ENCODE measurements at regions of chr1 and their contacts with region 1.

Region 1: DNA sequence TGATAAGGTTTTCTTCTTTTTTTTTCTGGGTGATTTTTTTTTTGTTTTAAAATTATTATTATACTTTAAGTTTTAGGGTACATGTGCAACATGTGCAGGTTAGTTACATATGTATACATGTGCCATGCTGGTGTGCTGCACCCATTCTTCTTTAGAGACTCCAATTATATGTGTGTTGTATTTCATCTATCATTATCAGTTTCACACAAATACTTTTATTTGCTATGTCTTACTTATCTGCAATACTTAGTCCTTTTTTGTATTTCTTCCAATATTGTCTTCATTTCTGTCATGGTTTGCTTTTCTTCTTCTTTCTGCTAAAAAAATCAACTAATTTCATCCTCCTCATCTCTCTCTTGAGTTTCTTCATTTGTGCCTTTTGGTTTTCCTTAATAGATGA is 3.9 kb upstream of the PDE4B start:
- DNase-seq: no peak
- H3K4me3 ChIP-seq: no peak overlapping the region
- H3K27ac ChIP-seq: no peak overlapping the region
- H3K4me1 ChIP-seq: no peaks in the 10 kb centered on the region
- H3K27me3 ChIP-seq: peaks cover 5 to 19% of the 10 kb centered on the region in 2 donors
- CTCF ChIP-seq: no peak
- POLR2A ChIP-seq: no peak

Region 2: DNA sequence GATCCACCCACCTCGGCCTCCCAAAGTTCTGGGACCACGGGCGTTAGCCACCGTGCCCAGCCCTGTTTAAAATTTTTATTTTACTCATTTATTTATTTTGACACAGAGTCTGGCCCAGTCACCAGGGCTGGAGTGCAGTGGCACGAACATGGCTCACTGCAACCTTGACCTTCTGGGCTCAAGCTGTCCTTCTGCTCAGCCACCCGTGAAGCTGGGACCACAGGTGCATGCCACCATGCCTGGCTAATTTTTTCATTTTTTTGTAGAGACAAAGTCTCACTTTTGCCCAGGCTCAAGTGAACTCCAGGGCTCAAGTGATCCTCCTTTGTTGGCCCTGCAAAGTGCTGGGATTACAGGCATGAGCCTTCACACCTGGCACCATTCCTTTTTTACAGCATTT is 506.9 kb before region 1 on chr1:
- intact Hi-C with region 1: loop called (anchors 5 kb)
- DNase-seq: no peak
- H3K4me3 ChIP-seq: no peak overlapping the region
- H3K27ac ChIP-seq: no peak overlapping the region
- H3K4me1 ChIP-seq: no peaks in the 10 kb centered on the region
- H3K27me3 ChIP-seq: no peaks in the 10 kb centered on the region
- CTCF ChIP-seq: no peak
- POLR2A ChIP-seq: no peak

Region 3: DNA sequence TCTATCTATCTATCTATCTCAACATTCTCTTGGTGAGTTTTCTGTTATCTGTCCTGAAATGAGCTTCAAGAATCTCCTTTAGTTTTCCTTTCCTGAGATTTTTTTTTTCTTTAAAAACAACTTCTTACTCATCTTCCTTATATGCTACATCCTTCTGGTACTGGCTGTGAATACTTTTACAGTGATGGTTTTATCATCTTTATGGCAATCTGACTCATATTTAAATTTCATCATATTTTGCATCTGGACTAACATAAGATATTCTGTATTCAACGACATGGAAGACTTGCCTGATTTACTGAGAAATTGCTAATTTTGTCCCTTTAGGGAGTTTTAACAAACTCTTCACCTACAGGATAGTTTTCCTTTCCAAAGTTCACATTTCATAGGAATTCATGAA is 37.0 kb after region 1 on chr1:
- intact Hi-C with region 1: loop called (anchors 2 kb)
- DNase-seq: no peak
- H3K4me3 ChIP-seq: no peak overlapping the region
- H3K27ac ChIP-seq: no peak overlapping the region
- H3K4me1 ChIP-seq: no peaks in the 10 kb centered on the region
- H3K27me3 ChIP-seq: no peaks in the 10 kb centered on the region
- CTCF ChIP-seq: no peak
- POLR2A ChIP-seq: no peak

Measured in breast epithelium (tissue), 4 donors.